Head of caudate nucleus (tissue), 42 donors: ENCODE measurements at regions of chr14 and their contacts with region 1.

Region 1: DNA sequence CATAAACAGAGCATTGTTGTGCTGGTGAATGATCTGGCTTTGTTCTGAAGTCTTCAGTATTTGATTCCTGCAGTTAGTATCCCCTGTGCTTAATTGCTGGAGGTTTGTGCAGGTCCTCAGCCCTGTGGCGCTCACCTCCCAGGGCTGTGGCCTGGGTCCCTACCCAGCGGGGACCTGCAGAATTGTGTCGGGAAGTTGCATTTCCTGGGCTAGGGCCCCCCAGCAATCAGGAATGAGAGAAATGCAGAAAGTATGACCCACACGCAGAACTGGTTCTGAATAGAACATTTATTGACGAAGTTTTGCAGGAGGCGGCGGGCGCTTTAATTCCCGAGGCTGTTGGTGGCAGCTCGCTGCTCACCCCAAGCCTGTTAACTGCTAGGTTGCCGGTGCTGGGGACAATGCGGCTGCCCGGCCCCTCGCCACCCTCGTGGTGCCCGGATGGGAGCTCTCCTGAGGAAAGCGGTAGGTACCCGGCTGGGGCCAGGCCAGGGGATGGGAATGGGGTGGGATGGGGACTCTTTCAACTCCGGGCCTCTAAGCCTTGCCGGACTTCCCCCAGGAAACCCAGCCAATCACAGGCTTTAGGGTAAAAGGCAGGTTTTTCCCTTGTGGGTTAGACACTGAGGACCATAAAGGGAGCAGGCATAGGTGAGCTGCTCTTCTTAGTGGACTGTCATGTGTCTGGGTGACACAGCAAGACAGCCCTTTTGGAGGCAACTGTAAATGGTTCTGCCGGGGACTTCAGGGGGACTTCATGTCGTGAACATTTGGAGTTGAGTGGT is 11.6 kb downstream of the PLEKHG3 start:
- DNase-seq: peak in 40 of 42 donors; percentile 35 to 87 (median 67)

Region 2: DNA sequence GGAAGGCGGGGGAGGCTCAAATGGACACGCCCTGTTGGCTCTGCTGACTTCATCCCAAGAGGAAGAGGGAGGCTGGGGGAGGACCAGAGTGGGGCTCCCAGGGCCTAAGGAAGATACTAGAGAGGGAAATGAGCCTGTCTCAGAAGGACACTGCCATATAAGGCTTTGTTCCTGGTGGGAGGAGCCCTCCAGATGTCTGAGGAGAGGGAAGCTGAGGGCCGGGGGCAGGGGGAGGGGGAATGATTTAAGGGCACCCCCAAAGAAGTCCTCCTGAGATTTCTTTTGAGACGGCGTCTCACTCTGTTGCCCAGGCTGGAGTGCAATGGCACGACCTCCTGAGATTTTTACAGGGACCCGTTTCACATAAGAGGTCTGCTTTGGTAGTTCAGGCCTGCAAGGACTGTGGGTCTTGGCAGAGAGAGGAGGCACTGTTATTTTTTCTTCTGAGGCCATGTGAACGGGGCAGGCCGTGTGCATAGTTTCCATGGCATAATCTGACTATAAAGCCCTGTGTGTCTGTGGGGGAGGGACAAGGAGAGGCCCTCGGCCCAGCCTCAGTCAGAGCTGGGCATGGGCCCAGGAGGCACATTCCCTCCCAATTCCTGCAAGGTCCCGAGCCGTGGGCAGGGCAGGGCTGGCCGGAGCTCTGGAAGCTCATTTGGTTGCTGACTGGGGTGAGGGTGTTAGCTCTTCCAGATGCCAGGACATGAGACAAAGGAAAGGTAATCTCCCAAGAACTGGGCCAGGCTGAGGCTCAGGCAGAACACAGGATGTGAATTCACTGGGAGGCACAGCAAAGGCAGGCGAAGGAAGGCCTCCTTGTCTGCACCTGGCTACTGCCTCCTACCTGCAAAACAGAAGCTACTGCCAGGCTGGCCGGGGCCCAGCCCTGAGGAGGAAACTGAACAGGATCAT is 33.8 kb before region 1 on chr14:
- intact Hi-C with region 1: loop called (anchors 5 kb)
- DNase-seq: peak; percentile 48 to 91 (median 77)